Right ventricle myocardium inferior (tissue), 1 donor: ENCODE measurements at regions of chr18 and their contacts with region 1.

Region 1: DNA sequence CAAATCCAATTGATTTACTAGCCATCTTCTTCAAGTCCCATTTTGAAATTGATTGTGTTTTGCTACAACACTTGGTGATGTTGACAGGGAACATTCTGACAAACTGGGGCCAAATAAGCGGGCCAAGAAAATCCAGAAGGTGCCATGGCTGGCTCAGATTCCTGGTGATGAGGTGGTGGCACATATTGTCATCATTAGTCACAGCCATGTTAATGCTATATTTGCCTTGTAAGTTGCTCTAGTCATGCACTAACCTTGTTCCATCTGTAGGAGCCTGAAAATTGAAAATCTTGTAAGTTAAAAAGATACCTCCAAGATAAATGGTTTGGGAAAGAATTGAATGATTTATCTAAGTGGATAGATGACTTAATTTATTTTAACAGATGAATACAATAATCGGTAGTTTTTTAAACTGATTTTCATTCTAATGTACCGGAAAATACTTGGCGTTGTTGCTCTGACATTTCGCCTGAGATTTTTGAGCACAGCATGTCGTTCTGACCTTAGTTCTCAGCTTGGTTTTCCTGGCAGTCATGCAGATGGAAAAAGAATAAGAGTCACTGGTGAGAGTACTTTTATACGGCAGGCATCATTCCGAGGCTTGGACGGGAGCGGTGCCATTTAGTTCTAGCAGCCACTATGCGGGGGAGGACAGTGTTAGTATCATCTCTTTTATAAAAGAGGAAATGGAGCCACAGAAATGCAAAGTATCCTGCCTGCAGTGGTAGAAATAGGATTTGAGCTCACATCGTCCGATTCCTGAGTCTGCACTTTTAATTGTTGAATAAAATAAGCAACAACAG is 133.9 kb downstream of the ZNF532 start:
- DNase-seq: no peak
- ATAC-seq: peak; percentile 81

Region 2: GRCh38 chr18:58911766-58912165 is 86.8 kb before region 1 on chr18:
- intact Hi-C with region 1: loop called (anchors 5 kb)
- DNase-seq: no peak
- ATAC-seq: peak; percentile 68

Region 3: DNA sequence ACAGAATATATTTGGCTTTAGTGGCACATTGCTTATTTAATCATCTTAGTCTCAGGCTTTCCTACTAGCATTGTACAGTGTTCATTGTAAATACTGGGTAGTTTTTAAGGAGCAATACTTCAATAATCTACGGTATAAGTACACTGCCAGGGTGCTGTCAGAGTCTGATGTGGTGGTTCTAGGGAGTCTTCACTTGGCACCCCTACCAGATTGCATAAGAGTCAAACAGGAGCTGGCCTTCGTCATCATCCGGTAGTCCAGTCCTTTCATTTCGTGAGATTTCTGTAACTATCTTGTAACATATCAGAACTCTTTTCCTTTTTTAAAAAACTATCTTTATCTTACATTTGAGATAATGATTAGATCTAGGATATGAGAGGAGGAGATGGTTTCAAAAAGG is 42.9 kb before region 1 on chr18:
- intact Hi-C with region 1: loop called (anchors 5 kb)
- DNase-seq: no peak
- ATAC-seq: peak; percentile 78

Region 4: DNA sequence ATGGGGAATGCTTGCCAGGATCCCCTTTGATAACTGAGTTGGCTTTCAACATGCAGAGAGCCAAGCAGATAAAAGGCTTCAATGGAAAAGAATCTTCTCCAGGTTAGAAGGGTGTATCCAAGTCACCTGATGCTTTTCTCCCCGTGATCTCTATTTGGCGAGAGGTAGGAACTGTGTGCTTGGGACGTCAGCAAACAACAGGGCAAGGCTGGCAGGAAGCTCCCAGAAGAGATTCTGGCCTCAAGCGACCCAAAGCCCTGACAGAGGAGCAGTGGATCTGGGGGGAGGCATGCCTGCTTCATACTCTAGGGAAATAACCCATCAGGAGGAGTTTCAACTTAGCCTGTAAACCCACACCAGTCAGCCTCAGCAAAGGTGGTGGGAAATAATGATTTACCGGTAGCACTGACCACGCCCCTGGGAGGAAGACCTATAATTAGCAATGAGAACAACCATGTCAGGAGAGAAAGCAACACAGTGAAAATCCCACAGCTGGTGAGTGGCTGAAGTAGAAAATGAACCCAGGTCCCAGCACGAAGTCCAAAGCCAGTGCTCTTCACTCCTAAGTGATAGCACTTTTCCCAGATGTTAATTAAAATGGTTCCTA is 64.8 kb after region 1 on chr18:
- intact Hi-C with region 1: loop called (anchors 5 kb)
- DNase-seq: no peak
- ATAC-seq: no peak

Region 5: DNA sequence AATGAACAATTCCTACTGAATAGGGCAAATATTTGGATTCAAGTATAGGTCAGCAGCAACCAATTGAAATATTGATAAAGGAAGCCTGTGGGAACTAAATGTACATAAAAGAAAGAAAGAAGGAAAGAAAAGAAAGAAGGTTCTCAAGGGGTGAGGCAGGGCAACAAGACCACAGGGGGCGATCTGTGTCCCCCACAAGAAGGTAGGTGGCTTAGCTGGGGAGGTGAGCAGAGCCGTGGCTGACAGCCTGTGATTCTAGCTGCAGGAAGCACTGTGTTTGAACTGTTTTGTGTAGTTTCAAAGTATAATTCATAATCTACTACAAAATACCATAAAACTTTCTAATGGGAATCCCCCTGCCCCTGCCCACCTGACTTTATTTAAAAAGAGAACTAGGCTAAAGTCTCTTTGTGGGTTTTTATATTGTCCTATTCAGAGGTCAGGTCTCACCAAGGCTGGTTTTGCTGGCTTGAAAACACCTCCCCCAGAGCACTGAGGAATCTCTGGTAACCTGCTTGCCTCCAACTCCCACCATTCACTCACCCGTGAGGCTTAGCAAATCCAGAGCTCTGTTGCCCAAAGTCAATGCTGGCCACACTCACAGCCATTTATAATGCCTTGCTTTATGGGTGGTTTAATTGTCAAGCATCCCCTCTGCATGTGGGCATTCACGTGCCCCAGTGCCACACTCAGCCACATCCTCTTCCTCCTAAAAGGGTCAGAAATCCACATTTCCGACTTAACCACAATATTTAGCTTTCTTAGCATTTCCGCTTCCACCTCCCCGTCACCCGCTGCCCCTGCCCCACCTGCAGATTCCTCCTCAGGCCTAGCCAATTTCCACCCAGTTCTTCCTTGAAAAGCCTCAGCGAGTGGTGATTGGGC is 396.9 kb after region 1 on chr18:
- intact Hi-C with region 1: no loop called
- DNase-seq: no peak
- ATAC-seq: no peak